Aorta (tissue), 5 donors: ENCODE measurements at regions of chr3 and their contacts with region 1.

Region 1: DNA sequence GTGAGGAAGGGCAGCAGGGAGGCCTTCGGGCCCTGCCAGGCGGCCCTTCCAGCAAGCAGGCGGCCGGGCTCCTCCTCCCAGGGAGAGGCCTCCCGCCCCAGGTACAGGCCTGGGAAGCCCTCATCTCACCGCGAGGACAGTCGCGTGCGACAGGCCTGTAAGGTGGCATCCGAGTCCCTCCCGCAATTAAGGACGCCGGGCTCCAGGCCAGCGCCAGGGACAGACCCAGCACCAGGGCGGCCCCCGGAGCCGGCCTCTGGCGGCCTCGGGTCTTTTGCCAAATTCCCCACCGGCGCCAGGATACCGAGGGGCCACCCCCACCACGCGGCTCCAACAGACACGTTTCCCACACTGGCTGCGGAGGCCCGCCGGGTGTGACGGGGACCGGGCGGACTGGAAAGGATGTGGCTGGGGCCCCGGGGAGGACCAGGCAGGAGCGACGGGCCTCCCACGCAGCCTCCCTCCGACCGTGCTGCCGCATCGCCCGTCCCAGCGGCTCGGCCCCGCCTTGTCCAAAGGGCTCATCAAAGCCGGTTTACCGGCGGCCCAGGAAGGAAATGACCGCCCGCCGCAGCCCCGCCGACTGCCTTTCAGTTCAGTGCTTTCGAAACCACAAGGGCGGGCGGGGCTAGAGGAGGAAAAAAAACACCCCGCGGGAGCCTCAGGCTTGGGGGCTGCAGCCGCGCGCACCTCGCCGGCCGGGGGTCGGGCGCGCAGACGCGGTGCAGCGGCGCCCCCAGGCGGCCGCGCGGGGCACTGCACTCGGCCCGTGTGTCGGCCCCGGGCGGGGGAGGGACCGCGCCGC is 11.3 kb downstream of the XXYLT1 start:
- DNase-seq: peak; percentile 92 to 94
- ATAC-seq: peak; percentile 92
- H3K4me3 ChIP-seq: peak overlapping the region; percentile 53 to 58
- H3K27ac ChIP-seq: peak overlapping the region in 1 of 2 donors; percentile 43
- H3K4me1 ChIP-seq: no peaks in the 10 kb centered on the region
- H3K27me3 ChIP-seq: no peaks in the 10 kb centered on the region

Region 2: DNA sequence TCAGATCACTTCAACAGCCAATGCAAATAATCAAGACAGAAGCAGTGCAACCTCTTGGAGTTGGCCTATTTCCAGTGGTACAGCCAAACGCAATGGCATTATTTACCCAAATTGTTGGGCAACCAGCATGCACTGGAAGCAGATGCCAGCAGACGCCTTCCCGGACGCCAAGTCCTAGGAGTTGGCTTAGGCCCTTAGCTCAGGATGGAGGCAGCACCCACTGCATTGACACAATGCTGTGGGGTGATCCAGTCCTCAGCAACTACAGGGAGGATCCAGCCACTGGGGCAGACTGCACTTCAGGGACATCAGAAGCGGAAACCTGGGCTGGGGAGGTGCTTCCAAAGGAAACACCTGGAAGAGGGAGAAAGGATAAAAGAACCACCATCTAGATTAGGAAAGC is 283.6 kb before region 1 on chr3:
- intact Hi-C with region 1: loop called in 1 of 2 experiments (anchors 10 kb)
- DNase-seq: peak; percentile 74 to 85
- ATAC-seq: peak; percentile 77
- H3K4me3 ChIP-seq: no peak overlapping the region
- H3K27ac ChIP-seq: peak overlapping the region; percentile 16 to 65
- H3K4me1 ChIP-seq: no peaks in the 10 kb centered on the region
- H3K27me3 ChIP-seq: no peaks in the 10 kb centered on the region

Region 3: DNA sequence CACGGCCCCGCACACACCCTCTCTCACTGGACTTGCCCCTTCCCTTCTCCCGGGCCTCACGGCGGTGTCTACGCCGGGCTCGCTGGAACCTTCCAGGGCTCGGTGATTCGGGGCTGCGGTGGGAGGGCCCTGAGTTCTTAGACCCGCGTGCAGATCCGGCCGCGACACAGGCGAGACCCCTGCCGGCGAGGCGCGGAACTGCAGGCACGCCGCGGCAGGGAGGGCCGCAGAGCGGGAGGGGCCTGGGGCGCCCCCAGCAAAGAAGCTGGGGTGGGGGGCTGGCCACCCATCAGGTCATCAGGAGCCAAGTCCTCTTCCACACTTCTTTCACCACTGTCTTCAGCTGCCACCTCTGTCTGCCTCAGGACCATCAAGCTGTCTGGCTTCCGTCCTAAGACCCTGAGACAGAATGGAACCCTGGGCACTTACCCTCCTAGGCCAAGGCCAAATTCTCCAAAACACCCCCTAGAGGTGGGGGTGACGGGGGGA is 153.2 kb before region 1 on chr3:
- intact Hi-C with region 1: loop called (anchors 5 kb)
- DNase-seq: peak; percentile 80 to 91
- ATAC-seq: peak; percentile 92
- H3K4me3 ChIP-seq: no peak overlapping the region
- H3K27ac ChIP-seq: no peak overlapping the region
- H3K4me1 ChIP-seq: no peaks in the 10 kb centered on the region
- H3K27me3 ChIP-seq: no peaks in the 10 kb centered on the region